Esophagus muscularis mucosa (tissue), 4 donors: ENCODE measurements at regions of chr10 and their contacts with region 1.

Region 1: DNA sequence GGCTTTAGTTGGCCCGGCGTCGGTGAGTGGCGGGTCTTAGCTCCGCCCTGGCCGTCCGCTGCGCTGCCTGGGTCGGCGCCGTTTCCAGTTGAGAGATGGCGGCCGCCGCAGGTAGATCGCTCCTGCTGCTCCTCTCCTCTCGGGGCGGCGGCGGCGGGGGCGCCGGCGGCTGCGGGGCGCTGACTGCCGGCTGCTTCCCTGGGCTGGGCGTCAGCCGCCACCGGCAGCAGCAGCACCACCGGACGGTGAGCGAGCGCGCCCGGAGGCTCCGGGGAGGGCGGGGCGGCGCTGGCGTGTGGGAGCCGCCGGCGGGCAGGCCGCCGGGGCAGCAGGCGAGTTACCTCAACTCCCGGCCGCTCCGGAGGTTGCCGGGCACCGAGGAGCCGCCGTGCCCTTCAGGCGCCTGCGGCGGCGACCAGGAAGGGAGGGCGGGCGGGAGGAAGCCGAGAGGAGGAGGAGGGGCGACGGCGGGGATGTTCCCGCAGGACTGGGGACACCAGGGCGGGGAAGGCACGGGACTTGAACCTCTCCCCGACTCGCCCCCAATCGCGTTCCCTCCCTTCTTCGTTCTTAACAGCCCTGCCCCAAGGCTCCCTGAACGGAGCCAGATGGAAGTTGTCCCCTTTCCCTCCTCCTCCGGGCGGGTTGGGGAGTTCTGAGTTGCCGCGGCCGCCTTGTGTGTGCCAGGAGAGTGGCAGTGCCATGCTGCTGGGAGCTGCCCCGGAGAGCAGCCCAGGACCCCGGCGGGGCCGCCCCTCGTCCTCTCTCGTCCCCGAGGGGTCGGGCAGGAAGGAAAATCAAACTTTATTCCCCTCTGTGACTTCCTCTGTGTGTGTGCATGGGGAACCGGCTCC is at the start of gene MCU:
- DNase-seq: peak; percentile 98
- H3K4me3 ChIP-seq: peak within 1 kb of the TSS; percentile 83 to 88 (median 86)
- H3K27ac ChIP-seq: peak within 1 kb of the TSS; percentile 90 to 96 (median 94)
- H3K4me1 ChIP-seq: peaks cover 24 to 39% (median 36%) of the 10 kb centered on the region in 4 donors
- H3K27me3 ChIP-seq: no peaks in the 10 kb centered on the region
- CTCF ChIP-seq: peak in 1 of 3 experiments; percentile 8
- EP300 ChIP-seq: no peak
- POLR2A ChIP-seq: no peak
- total RNA-seq, gene MCU: 14.9 to 20.6 (median 19.5) TPM

Region 2: GRCh38 chr10:72331601-72332422 is 360.5 kb before region 1 on chr10:
- intact Hi-C with region 1: no loop called
- DNase-seq: peak; percentile 95
- H3K4me3 ChIP-seq: peak overlapping the region; percentile 7 to 17 (median 11)
- H3K27ac ChIP-seq: peak overlapping the region; percentile 80 to 88 (median 84)
- H3K4me1 ChIP-seq: peaks cover 83 to 89% (median 84%) of the 10 kb centered on the region in 4 donors
- H3K27me3 ChIP-seq: no peaks in the 10 kb centered on the region
- CTCF ChIP-seq: peak in 2 of 3 experiments; percentile 45 to 46
- EP300 ChIP-seq: no peak
- POLR2A ChIP-seq: no peak

Region 3: GRCh38 chr10:72552857-72553256 is 139.4 kb before region 1 on chr10:
- intact Hi-C with region 1: no loop called
- DNase-seq: no peak
- H3K4me3 ChIP-seq: no peak overlapping the region
- H3K27ac ChIP-seq: no peak overlapping the region
- H3K4me1 ChIP-seq: no peaks in the 10 kb centered on the region
- H3K27me3 ChIP-seq: no peaks in the 10 kb centered on the region
- CTCF ChIP-seq: no peak
- EP300 ChIP-seq: no peak
- POLR2A ChIP-seq: no peak

Region 4: DNA sequence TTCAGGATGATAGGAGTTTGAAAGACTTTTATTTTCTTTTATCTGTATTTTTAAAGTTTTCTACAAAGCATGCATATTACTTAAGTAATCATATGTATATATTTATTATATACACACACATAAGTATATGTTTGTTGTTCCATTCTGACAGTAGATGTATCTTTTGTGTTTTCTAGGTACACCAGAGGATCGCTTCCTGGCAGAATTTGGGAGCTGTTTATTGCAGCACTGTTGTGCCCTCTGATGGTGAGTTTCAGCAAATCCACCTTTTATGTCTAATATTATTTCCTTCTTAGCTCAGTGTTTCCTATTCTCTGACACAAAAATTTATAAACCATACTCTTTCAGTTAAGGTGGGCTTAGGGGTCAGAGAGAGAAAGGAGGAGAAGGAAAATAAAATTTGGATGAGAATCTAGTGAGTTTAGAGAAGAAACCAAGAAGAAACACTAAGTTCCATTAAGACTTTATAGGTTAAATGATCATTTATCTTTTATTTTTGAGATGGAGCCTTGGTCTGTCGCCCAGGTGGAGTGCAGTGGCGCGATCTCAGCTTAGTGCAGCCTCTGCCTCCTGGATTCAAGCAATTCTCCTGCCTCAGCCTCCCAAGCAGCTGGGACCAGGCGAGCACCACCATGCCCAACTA is 142.0 kb after region 1 on chr10:
- intact Hi-C with region 1: loop called (anchors 2 kb)
- DNase-seq: no peak
- H3K4me3 ChIP-seq: no peak overlapping the region
- H3K27ac ChIP-seq: no peak overlapping the region
- H3K4me1 ChIP-seq: peaks cover 10 to 30% (median 23%) of the 10 kb centered on the region in 4 donors
- H3K27me3 ChIP-seq: no peaks in the 10 kb centered on the region
- CTCF ChIP-seq: peak; percentile 63 to 81 (median 65)
- EP300 ChIP-seq: no peak
- POLR2A ChIP-seq: no peak

Region 5: GRCh38 chr10:73131301-73131700 is 439.0 kb after region 1 on chr10:
- intact Hi-C with region 1: no loop called
- DNase-seq: no peak
- H3K4me3 ChIP-seq: no peak overlapping the region
- H3K27ac ChIP-seq: no peak overlapping the region
- H3K4me1 ChIP-seq: no peaks in the 10 kb centered on the region
- H3K27me3 ChIP-seq: no peaks in the 10 kb centered on the region
- CTCF ChIP-seq: no peak
- EP300 ChIP-seq: no peak
- POLR2A ChIP-seq: no peak